Aorta (tissue), 5 donors: ENCODE measurements at regions of chr1 and their contacts with region 1.

Region 1: DNA sequence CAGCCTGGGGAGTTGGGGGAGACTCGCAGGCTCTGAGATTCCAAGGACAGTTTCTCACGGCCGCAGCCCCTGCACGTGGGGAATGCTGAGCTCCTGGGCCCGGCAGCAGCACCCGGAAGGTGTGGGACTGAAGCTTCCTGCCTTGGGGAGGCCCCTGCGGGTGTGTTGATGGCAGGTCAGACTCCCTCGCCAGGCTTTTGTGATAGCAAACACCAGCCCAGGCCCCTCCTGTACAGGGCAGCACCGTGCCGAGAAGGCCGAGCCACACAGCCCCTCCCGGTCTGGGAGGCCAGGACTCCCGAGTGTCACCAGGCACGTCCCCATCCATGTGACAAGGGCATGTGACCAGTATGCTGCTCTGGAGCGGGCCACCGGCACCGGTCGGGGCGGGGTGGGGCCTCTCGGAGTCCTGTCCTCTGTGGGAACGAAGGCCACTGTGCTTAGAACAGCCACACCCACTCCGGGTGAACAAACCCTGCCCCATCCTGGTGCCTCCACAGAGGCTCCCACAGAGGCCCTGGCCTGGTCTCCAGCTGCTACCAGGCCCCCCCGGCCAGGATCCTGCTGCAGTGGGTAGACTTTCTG is 31.1 kb upstream of the ARHGEF16 start:
- DNase-seq: peak; percentile 88 to 90
- ATAC-seq: peak; percentile 84
- H3K4me3 ChIP-seq: no peak overlapping the region
- H3K27ac ChIP-seq: peak overlapping the region in 1 of 2 donors; percentile 72
- H3K4me1 ChIP-seq: no peaks in the 10 kb centered on the region
- H3K27me3 ChIP-seq: no peaks in the 10 kb centered on the region

Region 2: GRCh38 chr1:2821966-2822620 is 601.2 kb before region 1 on chr1:
- intact Hi-C with region 1: loop called (anchors 5 to 10 kb)
- DNase-seq: peak; percentile 78 to 87
- ATAC-seq: peak; percentile 82
- H3K4me3 ChIP-seq: no peak overlapping the region
- H3K27ac ChIP-seq: no peak overlapping the region
- H3K4me1 ChIP-seq: no peaks in the 10 kb centered on the region
- H3K27me3 ChIP-seq: no peaks in the 10 kb centered on the region

Region 3: GRCh38 chr1:2875707-2876561 is 547.4 kb before region 1 on chr1:
- intact Hi-C with region 1: loop called (anchors 5 kb)
- DNase-seq: peak; percentile 62 to 86
- ATAC-seq: peak; percentile 62
- H3K4me3 ChIP-seq: no peak overlapping the region
- H3K27ac ChIP-seq: no peak overlapping the region
- H3K4me1 ChIP-seq: no peaks in the 10 kb centered on the region
- H3K27me3 ChIP-seq: no peaks in the 10 kb centered on the region

Region 4: GRCh38 chr1:2927393-2928360 is 495.7 kb before region 1 on chr1:
- intact Hi-C with region 1: loop called in 1 of 2 experiments (anchors 5 kb)
- DNase-seq: peak; percentile 69 to 89
- ATAC-seq: peak; percentile 67
- H3K4me3 ChIP-seq: no peak overlapping the region
- H3K27ac ChIP-seq: peak overlapping the region; percentile 37 to 87
- H3K4me1 ChIP-seq: no peaks in the 10 kb centered on the region
- H3K27me3 ChIP-seq: no peaks in the 10 kb centered on the region

Region 5: DNA sequence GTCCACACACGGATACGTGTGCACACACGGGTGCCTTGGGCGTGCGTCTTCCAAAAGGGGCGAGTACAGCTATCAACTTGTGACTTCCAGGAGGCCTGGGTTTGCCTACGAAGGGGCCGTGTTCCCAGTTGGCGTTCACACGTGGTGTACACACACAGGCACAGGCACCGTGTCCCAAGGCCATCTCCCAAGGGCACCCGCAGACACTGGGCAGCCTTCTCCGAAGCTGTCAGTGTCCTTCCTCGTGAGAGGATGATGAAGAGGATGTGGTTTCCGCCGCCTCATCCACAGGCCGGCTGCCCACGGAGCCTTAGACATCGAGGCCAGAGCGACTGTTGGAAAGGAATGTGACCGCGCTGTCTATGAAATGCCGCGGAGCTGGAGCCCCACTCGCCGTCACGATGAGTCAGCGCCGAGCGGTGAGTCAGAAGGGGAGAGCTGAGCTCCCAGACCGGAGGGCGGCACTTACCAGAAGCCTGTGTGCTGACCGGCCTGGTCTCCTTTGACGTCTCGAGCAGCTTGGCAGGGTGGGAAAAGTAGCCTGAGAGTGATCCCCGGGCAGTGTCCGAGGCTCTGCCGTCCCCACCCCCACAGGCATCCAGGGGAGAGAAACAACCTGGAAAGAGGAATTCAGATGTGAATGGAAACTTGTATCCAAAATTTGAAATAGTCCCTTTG is 110.3 kb before region 1 on chr1:
- intact Hi-C with region 1: loop called in 1 of 2 experiments (anchors 5 kb)
- DNase-seq: peak; percentile 98 to 99
- ATAC-seq: peak; percentile 95
- H3K4me3 ChIP-seq: no peak overlapping the region
- H3K27ac ChIP-seq: peak overlapping the region; percentile 91 to 99
- H3K4me1 ChIP-seq: no peaks in the 10 kb centered on the region
- H3K27me3 ChIP-seq: no peaks in the 10 kb centered on the region

Region 6: GRCh38 chr1:3460672-3461131 is 37.4 kb after region 1 on chr1:
- intact Hi-C with region 1: no loop called
- DNase-seq: peak in 1 of 2 donors; percentile 39
- ATAC-seq: no peak
- H3K4me3 ChIP-seq: no peak overlapping the region
- H3K27ac ChIP-seq: no peak overlapping the region
- H3K4me1 ChIP-seq: no peaks in the 10 kb centered on the region
- H3K27me3 ChIP-seq: no peaks in the 10 kb centered on the region

Region 7: DNA sequence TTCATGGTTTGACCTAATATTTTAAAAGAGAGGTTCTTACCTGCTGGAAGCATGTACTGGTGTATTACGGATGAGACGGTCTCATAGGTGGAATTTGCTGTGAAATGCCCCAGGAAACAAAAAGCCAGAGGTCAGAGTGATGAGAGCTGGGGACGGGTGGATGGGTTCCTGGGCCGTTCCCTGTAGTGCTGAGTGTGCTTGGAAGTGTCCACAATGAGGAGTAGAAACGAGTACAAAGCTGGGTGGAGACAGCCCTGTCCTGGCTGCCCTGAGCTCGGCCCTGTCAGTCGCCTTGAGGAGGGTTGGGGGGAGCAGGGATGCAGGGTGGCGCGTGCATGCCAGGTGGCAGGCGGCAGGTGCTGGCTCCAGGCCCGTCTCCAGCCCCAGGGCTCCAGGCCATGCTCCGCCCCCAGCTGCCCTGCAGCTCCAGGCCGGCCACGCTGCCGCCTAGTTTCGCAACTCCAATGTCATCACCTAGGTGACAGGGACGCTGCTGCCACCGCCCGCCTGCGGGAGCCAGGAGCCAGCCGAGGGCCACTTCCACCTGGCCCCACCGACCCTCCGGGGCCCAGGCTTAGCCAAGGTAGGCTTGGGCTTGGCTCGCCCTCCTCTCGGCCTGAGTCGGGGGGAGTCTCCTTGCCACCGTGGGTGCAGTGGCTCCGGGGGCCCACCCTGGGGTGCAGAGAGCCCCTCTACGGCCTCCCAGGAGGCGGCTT is 245.4 kb after region 1 on chr1:
- intact Hi-C with region 1: no loop called
- DNase-seq: peak; percentile 79 to 84
- ATAC-seq: peak; percentile 58
- H3K4me3 ChIP-seq: no peak overlapping the region
- H3K27ac ChIP-seq: no peak overlapping the region
- H3K4me1 ChIP-seq: no peaks in the 10 kb centered on the region
- H3K27me3 ChIP-seq: no peaks in the 10 kb centered on the region

Region 8: GRCh38 chr1:3717715-3718601 is 294.6 kb after region 1 on chr1:
- intact Hi-C with region 1: no loop called
- DNase-seq: no peak
- ATAC-seq: no peak
- H3K4me3 ChIP-seq: no peak overlapping the region
- H3K27ac ChIP-seq: no peak overlapping the region
- H3K4me1 ChIP-seq: no peaks in the 10 kb centered on the region
- H3K27me3 ChIP-seq: no peaks in the 10 kb centered on the region